A673 (cell line): ENCODE measurements at regions of chr6 and their contacts with region 1.

Region 1: GRCh38 chr6:21461844-21462518 is 131.6 kb upstream of the SOX4 start:
- DNase-seq: no peak
- H3K4me3 ChIP-seq: no peak overlapping the region
- H3K27ac ChIP-seq: no peak overlapping the region
- H3K4me1 ChIP-seq: no peaks in the 10 kb centered on the region
- H3K27me3 ChIP-seq: no peaks in the 10 kb centered on the region
- CTCF ChIP-seq: no peak

Region 2: DNA sequence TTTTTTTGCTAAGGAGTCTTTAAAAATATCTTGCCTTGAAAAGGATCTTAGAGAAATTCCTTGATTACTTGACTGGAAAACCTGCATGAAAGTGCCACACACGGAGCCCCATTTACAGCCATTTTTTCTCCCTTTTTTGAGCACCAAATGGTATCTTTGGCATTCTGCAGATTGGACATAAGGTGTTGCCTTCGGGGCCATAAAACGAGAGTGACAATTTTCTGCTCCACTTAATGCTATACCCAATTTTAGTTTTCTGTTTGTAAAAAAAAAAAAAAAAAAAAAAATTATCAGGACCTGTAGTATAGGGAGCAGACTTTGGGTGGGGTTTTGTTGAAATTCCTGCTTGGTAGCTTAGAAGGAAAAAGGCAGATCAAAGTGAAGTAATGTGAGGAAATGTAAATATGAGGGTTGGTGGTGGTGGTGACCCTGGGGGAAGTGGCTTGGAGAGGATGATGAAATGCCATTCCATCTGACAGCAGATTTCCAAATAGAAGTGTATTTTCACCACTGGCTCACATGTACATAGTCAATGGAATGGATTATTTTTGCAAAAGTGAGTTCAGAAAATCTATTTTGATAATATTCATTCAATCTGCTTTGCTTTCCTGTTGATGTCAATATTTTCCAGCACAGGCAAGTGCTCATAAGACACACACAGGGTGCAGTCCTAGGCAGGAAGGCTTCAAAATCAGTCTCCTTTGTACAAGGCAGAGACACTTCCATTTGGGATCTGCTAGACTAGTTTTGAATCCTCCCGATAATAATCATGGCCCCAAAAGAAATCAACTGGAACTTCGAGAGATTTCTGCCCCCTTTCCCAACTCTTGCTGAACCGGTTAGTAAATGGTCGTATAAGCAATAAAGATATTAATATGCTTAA is 80.4 kb before region 1 on chr6:
- CTCF ChIA-PET with region 1: no interaction called
- POLR2A ChIA-PET with region 1: no interaction called
- intact Hi-C with region 1: no loop called
- DNase-seq: no peak
- H3K4me3 ChIP-seq: no peak overlapping the region
- H3K27ac ChIP-seq: no peak overlapping the region
- H3K4me1 ChIP-seq: no peaks in the 10 kb centered on the region
- H3K27me3 ChIP-seq: no peaks in the 10 kb centered on the region
- CTCF ChIP-seq: no peak

Region 3: DNA sequence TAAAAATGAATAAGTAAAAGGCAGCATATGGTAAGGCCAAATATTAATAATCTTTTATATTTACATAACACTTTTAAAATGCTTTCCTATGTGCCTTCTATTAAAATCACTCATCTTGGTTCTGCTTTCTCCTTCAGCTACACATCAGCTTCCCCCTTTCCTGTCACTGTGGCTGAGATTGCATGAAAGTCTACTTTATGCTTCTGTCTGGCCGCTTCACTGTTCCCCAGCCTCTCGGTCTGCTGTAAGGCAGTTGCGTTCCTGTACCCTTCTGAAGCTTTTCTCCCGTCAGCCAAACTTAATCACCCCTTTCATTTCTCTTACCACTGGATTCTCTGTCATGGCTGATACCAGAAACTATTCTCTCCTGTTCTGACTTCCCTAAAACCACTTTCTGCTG is 166.2 kb after region 1 on chr6:
- CTCF ChIA-PET with region 1: no interaction called
- POLR2A ChIA-PET with region 1: no interaction called
- intact Hi-C with region 1: no loop called
- DNase-seq: no peak
- H3K4me3 ChIP-seq: no peak overlapping the region
- H3K27ac ChIP-seq: no peak overlapping the region
- H3K4me1 ChIP-seq: no peaks in the 10 kb centered on the region
- H3K27me3 ChIP-seq: no peaks in the 10 kb centered on the region
- CTCF ChIP-seq: no peak

Region 4: GRCh38 chr6:23446394-23447046 is 1984.5 kb after region 1 on chr6:
- CTCF ChIA-PET with region 1: interaction called, 14 read pairs
- POLR2A ChIA-PET with region 1: no interaction called
- intact Hi-C with region 1: no loop called
- DNase-seq: peak; percentile 70
- H3K4me3 ChIP-seq: no peak overlapping the region
- H3K27ac ChIP-seq: no peak overlapping the region
- H3K4me1 ChIP-seq: no peaks in the 10 kb centered on the region
- H3K27me3 ChIP-seq: no peaks in the 10 kb centered on the region
- CTCF ChIP-seq: peak; percentile 69